Ascending aorta (tissue), 2 donors: ENCODE measurements at regions of chr2 and their contacts with region 1.

Region 1: GRCh38 chr2:229586746-229587705 is 127.3 kb downstream of the DNER start:
- DNase-seq: peak; percentile 21 to 88
- H3K4me3 ChIP-seq: peak overlapping the region; percentile 32 to 45
- H3K27ac ChIP-seq: no peak overlapping the region
- H3K4me1 ChIP-seq: peaks cover 0 to 4% of the 10 kb centered on the region in 2 donors
- H3K27me3 ChIP-seq: no peaks in the 10 kb centered on the region
- CTCF ChIP-seq: peak; percentile 86 to 93 (median 89)

Region 2: DNA sequence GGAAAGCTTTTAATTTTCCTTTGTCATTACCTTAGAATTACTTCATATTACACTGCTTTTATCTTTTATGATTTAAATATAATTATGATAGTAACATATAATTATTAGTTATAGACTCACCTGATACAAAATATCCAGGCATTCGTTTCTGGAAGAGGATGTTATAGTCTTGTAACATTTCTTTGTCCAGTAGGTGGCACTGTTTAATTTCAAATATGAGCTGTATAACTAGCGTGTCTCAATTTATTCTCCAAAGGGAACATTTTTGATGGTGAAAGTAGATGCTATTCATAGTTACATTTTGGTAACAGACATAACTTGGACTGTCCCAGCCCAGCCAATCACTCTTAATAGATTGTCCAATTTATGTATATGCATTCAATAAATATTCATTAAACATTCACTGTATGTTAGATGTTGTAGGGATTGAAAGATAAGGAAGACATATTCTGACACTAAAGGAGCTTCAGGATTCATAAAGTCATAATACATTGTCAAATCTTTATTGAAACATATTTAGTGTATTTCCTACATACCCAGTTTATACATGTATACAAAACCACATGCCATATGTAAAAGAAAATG is 1696.4 kb before region 1 on chr2:
- intact Hi-C with region 1: loop called (anchors 10 kb)
- DNase-seq: no peak
- H3K4me3 ChIP-seq: no peak overlapping the region
- H3K27ac ChIP-seq: no peak overlapping the region
- H3K4me1 ChIP-seq: no peaks in the 10 kb centered on the region
- H3K27me3 ChIP-seq: no peaks in the 10 kb centered on the region
- CTCF ChIP-seq: peak; percentile 30 to 72 (median 47)

Region 3: DNA sequence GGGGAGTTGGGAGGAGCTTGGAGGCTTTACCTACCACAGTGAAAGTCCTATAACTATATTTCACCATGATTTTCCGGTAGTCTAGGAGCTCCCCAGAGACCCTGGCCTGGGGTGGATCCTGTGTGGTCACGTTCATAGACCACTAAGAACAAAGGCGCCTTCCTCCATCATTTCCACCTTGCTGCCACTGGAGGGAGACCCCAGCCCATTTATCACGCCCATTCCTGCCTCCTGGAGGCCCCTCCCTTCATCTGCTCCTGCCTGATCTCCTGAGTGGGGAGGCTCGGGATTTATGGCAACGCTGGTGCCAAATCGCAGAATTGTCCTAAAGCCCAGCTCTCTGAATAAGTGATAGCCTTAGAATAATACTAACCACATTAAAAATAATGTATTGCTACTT is 898.0 kb before region 1 on chr2:
- intact Hi-C with region 1: loop called (anchors 5 kb)
- DNase-seq: no peak
- H3K4me3 ChIP-seq: no peak overlapping the region
- H3K27ac ChIP-seq: no peak overlapping the region
- H3K4me1 ChIP-seq: no peaks in the 10 kb centered on the region
- H3K27me3 ChIP-seq: no peaks in the 10 kb centered on the region
- CTCF ChIP-seq: peak in 2 of 3 experiments; percentile 10 to 22

Region 4: GRCh38 chr2:229133155-229133772 is 453.8 kb before region 1 on chr2:
- intact Hi-C with region 1: loop called (anchors 5 kb)
- DNase-seq: no peak
- H3K4me3 ChIP-seq: no peak overlapping the region
- H3K27ac ChIP-seq: no peak overlapping the region
- H3K4me1 ChIP-seq: peaks cover 0 to 15% of the 10 kb centered on the region in 2 donors
- H3K27me3 ChIP-seq: no peaks in the 10 kb centered on the region
- CTCF ChIP-seq: peak; percentile 46 to 62 (median 51)

Region 5: GRCh38 chr2:229342376-229342775 is 244.7 kb before region 1 on chr2:
- intact Hi-C with region 1: loop called (anchors 2 kb)
- DNase-seq: no peak
- H3K4me3 ChIP-seq: no peak overlapping the region
- H3K27ac ChIP-seq: no peak overlapping the region
- H3K4me1 ChIP-seq: no peaks in the 10 kb centered on the region
- H3K27me3 ChIP-seq: no peaks in the 10 kb centered on the region
- CTCF ChIP-seq: peak in 2 of 3 experiments; percentile 20 to 49

Region 6: DNA sequence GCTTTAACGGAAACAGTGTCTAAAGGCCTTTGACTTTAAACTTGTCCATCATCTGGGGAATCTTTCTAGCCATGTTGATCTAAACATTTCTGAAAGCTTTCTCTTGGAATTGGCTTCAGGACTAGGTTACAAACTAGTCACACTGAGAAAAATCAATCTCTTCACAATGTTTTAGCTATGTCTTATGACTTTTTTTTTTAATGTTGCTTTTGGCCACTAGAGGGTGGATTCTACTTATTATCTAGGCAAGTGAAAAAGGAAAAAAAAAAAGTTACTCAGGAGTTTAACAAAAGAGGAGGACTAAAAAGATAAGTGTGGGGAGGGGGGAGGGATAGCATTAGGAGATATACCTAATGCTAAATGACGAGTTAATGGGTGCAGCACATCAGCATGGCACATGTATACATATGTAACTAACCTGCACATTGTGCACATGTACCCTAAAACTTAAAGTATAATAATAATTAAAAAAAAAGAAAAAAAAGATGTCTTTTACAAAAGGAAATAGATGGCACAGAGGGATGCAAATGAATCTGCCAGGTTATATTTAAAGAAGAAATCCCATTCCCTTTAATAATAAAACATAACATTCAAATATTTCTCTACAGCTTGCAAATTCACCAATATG is 155.6 kb before region 1 on chr2:
- intact Hi-C with region 1: loop called (anchors 1 kb)
- DNase-seq: no peak
- H3K4me3 ChIP-seq: no peak overlapping the region
- H3K27ac ChIP-seq: peak overlapping the region; percentile 1 to 9
- H3K4me1 ChIP-seq: peaks cover 0 to 28% of the 10 kb centered on the region in 2 donors
- H3K27me3 ChIP-seq: no peaks in the 10 kb centered on the region
- CTCF ChIP-seq: peak; percentile 26 to 45 (median 37)

Region 7: GRCh38 chr2:229612384-229612971 is 25.5 kb after region 1 on chr2:
- intact Hi-C with region 1: no loop called
- DNase-seq: no peak
- H3K4me3 ChIP-seq: no peak overlapping the region
- H3K27ac ChIP-seq: no peak overlapping the region
- H3K4me1 ChIP-seq: no peaks in the 10 kb centered on the region
- H3K27me3 ChIP-seq: no peaks in the 10 kb centered on the region
- CTCF ChIP-seq: no peak